ENCODE measurements at regions of chr15 and their contacts with region 1.

Region 1: GRCh38 chr15:30865257-30865656 is 38.5 kb upstream of the FAN1 start:
- DNase-seq: no peak
- ATAC-seq: no peak
- H3K4me3 ChIP-seq: no peak overlapping the region
- H3K4me3 Mint-ChIP-seq: no peak overlapping the region
- H3K27ac ChIP-seq: no peak overlapping the region
- H3K27ac Mint-ChIP-seq: no peak overlapping the region
- H3K4me1 ChIP-seq: no peaks in the 10 kb centered on the region
- H3K4me1 Mint-ChIP-seq: peaks cover 0 to 4% (median 0%) of the 10 kb centered on the region in 7 donors
- H3K27me3 ChIP-seq: no peaks in the 10 kb centered on the region
- H3K27me3 Mint-ChIP-seq: no peaks in the 10 kb centered on the region

Region 2: DNA sequence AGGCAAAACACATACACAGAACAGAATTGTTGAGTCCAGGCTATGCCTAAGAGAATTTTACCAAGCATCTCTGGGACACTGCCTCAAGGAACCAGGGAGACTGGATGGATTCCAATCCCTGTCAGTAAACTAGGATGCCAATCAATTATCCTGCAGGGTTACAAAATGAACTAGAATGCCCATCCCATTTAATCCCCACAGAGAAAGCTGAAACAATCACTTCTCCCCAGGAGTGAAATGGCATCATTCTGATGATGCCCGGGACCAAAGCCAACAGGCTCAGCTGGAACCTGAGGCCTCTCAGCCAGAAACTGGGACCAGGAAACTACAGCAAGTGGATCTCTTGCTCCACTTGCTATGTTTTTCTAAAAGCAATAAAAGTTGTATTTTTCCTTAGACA is 913.0 kb before region 1 on chr15:
- CTCF ChIA-PET with region 1: no interaction called
- POLR2A ChIA-PET with region 1: no interaction called
- intact Hi-C with region 1: no loop called
- DNase-seq: no peak
- ATAC-seq: no peak
- H3K4me3 ChIP-seq: no peak overlapping the region
- H3K4me3 Mint-ChIP-seq: no peak overlapping the region
- H3K27ac ChIP-seq: no peak overlapping the region
- H3K27ac Mint-ChIP-seq: no peak overlapping the region
- H3K4me1 ChIP-seq: no peaks in the 10 kb centered on the region
- H3K4me1 Mint-ChIP-seq: peaks cover 0 to 1% (median 0%) of the 10 kb centered on the region in 7 donors
- H3K27me3 ChIP-seq: no peaks in the 10 kb centered on the region
- H3K27me3 Mint-ChIP-seq: peaks cover 0 to 7% (median 4%) of the 10 kb centered on the region in 5 donors

Region 3: DNA sequence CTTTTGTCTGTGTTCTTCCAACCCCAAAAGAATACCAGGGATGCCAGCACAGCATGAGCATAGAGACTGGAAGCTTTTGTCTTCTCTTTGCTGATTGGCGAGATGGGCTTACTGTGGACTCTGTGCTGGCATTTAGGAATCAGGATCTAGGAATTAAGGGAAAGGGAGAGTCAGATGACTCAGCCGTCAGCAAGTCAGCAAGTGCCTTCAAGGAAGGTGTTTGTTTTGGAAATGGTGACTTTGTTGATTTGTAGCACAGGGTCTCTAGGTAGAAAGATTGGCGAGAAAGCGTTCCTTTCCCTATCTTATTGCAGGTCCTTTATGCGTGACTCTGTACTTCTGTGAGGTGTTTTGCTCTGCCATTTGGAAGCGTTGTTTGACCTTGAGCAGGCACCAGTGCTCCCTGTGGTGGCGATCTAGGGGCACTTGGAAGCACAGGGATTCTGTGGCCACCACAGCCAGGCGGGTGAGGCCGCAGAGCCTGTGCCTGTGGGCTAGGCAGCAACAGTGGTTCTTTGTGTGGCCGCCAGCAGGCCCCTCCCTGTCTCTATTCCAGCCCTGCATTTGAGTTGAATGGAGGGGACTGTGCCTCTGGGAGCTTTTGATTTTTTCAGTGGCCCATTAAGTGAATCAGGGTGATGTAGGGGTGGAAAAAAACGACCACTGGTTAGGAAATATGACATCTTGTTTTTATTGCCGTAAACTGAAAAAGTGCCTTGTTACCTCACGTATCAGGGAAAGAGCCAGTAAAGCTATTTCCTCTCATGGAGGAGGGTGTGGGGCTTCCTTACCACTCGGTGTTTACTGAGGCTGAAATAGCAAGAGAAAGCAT is 57.4 kb after region 1 on chr15:
- CTCF ChIA-PET with region 1: no interaction called
- POLR2A ChIA-PET with region 1: no interaction called
- intact Hi-C with region 1: loop called in 1 of 2 experiments (anchors 10 kb)
- DNase-seq: no peak
- ATAC-seq: no peak
- H3K4me3 ChIP-seq: no peak overlapping the region
- H3K4me3 Mint-ChIP-seq: no peak overlapping the region
- H3K27ac ChIP-seq: no peak overlapping the region
- H3K27ac Mint-ChIP-seq: peak overlapping the region in 1 of 9 donors; percentile 53
- H3K4me1 ChIP-seq: no peaks in the 10 kb centered on the region
- H3K4me1 Mint-ChIP-seq: peaks cover 0 to 6% (median 0%) of the 10 kb centered on the region in 7 donors
- H3K27me3 ChIP-seq: no peaks in the 10 kb centered on the region
- H3K27me3 Mint-ChIP-seq: no peaks in the 10 kb centered on the region